PC-9 (cell line): ENCODE measurements at regions of chr14 and their contacts with region 1.

Region 1: GRCh38 chr14:49363821-49364751 is 222.1 kb downstream of the RPS29 start:
- DNase-seq: no peak
- H3K4me3 ChIP-seq: no peak overlapping the region
- H3K27ac ChIP-seq: no peak overlapping the region
- H3K4me1 ChIP-seq: no peaks in the 10 kb centered on the region
- H3K27me3 ChIP-seq: no peaks in the 10 kb centered on the region
- CTCF ChIP-seq: no peak

Region 2: DNA sequence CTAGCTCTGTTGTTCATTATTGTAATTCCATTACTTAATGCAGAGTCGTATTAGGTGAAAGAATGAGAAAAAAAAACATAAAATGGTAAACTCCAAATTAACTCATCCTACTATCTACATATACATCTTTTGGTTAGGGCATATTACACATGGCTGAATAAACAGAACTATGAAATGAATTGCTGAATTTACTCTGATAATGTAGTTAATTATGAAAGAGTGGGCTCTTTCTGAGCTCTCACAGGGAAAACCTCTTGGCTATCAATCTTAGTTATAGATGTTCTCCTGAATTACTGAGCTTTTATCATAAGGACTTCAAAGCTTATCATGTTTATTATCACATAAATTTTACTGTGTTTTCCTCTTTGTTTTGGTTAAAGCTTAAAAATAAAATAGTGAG is 890.1 kb before region 1 on chr14:
- CTCF ChIA-PET with region 1: no interaction called
- POLR2A ChIA-PET with region 1: no interaction called
- intact Hi-C with region 1: no loop called
- DNase-seq: no peak
- H3K4me3 ChIP-seq: no peak overlapping the region
- H3K27ac ChIP-seq: no peak overlapping the region
- H3K4me1 ChIP-seq: no peaks in the 10 kb centered on the region
- H3K27me3 ChIP-seq: no peaks in the 10 kb centered on the region
- CTCF ChIP-seq: no peak

Region 3: GRCh38 chr14:49786315-49787110 is 422.4 kb after region 1 on chr14:
- CTCF ChIA-PET with region 1: no interaction called
- POLR2A ChIA-PET with region 1: interaction called, 13 read pairs
- intact Hi-C with region 1: no loop called
- DNase-seq: no peak
- H3K4me3 ChIP-seq: no peak overlapping the region
- H3K27ac ChIP-seq: no peak overlapping the region
- H3K4me1 ChIP-seq: no peaks in the 10 kb centered on the region
- H3K27me3 ChIP-seq: no peaks in the 10 kb centered on the region
- CTCF ChIP-seq: no peak